Vagina (tissue), 2 donors: ENCODE measurements at regions of chr12 and their contacts with region 1.

Region 1: GRCh38 chr12:82574191-82574590 is 112.5 kb upstream of the TMTC2 start:
- DNase-seq: no peak
- H3K4me3 ChIP-seq: no peak overlapping the region
- H3K27ac ChIP-seq: no peak overlapping the region
- H3K4me1 ChIP-seq: no peaks in the 10 kb centered on the region
- H3K27me3 ChIP-seq: no peaks in the 10 kb centered on the region
- CTCF ChIP-seq: no peak
- POLR2A ChIP-seq: no peak

Region 2: DNA sequence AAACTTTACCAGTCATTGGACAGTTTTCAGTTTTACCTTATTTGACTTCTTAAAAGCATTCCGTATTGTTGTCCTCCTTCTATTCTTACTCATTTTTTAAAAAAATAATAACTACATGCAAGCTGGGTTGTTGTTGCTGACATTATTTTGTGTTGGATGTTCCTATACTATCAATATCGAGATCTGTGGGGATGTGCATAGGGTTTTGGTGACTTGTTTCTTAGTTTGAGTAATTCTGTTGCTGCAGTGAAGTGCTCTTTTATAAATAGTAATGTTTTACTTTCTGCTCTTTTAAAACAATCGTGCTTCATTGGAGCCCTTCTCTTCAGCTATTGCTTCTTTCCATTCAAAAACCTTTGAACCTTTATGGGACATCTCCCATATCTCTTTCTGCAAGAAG is 136.4 kb before region 1 on chr12:
- intact Hi-C with region 1: no loop called
- DNase-seq: no peak
- H3K4me3 ChIP-seq: no peak overlapping the region
- H3K27ac ChIP-seq: no peak overlapping the region
- H3K4me1 ChIP-seq: no peaks in the 10 kb centered on the region
- H3K27me3 ChIP-seq: no peaks in the 10 kb centered on the region
- CTCF ChIP-seq: no peak
- POLR2A ChIP-seq: no peak

Region 3: GRCh38 chr12:82517027-82517426 is 57.2 kb before region 1 on chr12:
- intact Hi-C with region 1: no loop called
- DNase-seq: no peak
- H3K4me3 ChIP-seq: no peak overlapping the region
- H3K27ac ChIP-seq: no peak overlapping the region
- H3K4me1 ChIP-seq: no peaks in the 10 kb centered on the region
- H3K27me3 ChIP-seq: no peaks in the 10 kb centered on the region
- CTCF ChIP-seq: no peak
- POLR2A ChIP-seq: no peak

Region 4: DNA sequence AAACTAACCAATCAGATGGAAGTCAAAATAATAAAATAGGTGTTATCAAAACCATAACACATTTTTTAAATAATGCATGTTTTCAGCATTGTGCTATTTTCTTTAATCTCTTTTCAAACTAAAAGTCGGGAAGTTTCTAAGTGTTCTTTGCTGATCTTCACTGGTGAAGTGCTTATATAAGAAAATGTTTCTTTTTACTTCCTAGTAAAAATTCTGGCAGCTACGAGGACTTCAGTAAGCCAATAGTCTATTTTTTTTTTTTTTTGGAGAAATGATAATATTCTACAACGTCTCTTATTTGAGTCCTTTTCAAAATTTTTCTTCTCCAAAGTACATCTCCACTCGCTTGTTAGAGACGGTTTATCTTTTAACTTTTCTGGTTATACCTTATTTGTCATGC is 1890.4 kb after region 1 on chr12:
- intact Hi-C with region 1: loop called (anchors 5 kb)
- DNase-seq: no peak
- H3K4me3 ChIP-seq: no peak overlapping the region
- H3K27ac ChIP-seq: no peak overlapping the region
- H3K4me1 ChIP-seq: no peaks in the 10 kb centered on the region
- H3K27me3 ChIP-seq: no peaks in the 10 kb centered on the region
- CTCF ChIP-seq: no peak
- POLR2A ChIP-seq: no peak